MCF 10A (cell line): ENCODE measurements at regions of chr2 and their contacts with region 1.

Region 1: DNA sequence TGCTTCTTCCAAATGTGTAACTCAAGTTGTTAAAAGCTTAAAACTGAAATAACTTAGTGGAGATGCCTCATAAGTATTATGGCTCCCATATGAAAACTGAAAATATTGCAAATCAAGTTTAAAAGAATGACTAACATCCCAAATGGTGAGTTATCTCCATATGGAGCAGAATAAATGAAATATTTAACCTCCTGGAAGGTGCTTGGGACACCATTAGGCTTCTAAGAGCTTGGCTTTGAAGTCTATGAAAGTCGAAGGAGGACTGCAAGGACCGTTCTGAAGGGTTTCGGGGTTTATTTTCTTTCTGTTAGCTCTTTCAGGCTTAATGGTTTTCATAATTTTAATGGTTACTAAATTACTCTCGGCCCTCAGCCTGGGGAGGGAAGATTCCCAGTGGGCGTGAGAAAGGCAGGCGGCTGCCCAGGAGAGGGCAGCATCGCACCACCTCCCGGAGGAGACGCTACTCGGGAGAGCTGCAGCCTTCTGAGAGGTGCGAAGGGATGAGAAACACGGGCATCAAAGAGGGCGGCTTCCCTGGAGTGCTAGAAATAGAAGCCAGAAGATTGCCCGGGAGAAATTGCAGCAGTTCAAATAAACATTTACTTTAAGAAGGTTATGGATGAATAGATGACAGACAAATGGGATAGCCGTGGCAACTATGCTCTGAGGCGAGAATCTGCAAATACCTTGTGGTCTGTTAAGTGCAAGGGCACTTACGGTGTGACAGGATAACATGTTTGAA is 43.1 kb downstream of the MAP3K19 start:
- DNase-seq: peak; percentile 73
- H3K4me3 Mint-ChIP-seq: no peak overlapping the region
- H3K27ac Mint-ChIP-seq: no peak overlapping the region
- H3K4me1 Mint-ChIP-seq: peaks cover 9% of the 10 kb centered on the region
- H3K27me3 Mint-ChIP-seq: peaks cover 25% of the 10 kb centered on the region
- CTCF ChIP-seq: peak; percentile 94

Region 2: DNA sequence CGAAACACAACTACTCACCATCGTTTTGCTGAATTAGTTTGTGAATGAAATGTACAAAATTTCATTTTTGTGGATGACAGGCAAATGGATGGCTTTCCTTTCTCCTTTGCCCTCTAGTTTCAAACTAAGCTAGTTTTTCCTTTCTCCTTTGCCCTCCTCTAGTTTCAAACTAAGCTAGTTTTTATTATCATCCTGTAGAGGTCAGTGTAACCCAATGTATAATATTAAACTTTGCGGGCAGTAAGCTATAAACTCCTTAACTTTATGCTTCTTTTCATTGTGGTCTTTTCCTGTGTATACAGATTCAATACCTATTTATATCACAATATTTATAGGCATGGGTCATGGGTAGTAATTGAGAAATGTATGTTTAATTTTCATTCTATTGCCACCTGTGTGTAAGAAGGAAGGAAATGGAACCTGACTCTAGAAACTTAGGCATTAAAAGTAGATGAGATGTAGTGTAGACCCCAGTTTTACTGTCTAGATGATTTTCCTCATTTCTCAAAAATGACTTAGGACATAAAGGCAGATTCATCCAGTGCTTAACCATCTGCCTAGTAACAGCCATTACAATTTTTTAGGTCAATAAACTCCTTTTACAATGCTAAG is 15.1 kb before region 1 on chr2:
- CTCF ChIA-PET with region 1: interaction called, 24 read pairs
- POLR2A ChIA-PET with region 1: interaction called, 5 read pairs
- intact Hi-C with region 1: no loop called
- DNase-seq: peak; percentile 46
- H3K4me3 Mint-ChIP-seq: no peak overlapping the region
- H3K27ac Mint-ChIP-seq: no peak overlapping the region
- H3K4me1 Mint-ChIP-seq: no peaks in the 10 kb centered on the region
- H3K27me3 Mint-ChIP-seq: peaks cover 50% of the 10 kb centered on the region
- CTCF ChIP-seq: peak; percentile 46

Region 3: DNA sequence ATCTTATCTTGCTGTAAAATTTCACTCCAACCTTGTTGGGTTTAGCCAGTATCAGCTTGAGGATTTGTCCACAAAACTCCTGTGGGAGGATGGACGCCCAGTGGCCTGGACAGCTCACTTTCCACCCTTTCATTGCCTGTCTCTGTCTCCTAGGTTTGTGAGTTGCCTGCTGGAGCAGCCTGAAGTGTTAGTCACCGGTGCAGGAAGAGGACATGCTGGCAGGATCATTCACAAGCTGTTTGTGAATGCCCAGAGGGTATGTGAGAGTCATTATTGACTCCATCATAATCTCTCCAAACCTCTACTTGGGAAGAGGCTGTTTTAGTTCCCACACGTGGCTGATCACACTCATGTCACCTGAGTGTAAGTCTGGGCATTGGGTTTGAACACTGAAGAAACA is 160.3 kb after region 1 on chr2:
- CTCF ChIA-PET with region 1: interaction called, 9 read pairs
- POLR2A ChIA-PET with region 1: no interaction called
- intact Hi-C with region 1: loop called (anchors 2 kb)
- DNase-seq: peak; percentile 75
- H3K4me3 Mint-ChIP-seq: no peak overlapping the region
- H3K27ac Mint-ChIP-seq: no peak overlapping the region
- H3K4me1 Mint-ChIP-seq: peaks cover 6% of the 10 kb centered on the region
- H3K27me3 Mint-ChIP-seq: no peaks in the 10 kb centered on the region
- CTCF ChIP-seq: no peak

Region 4: DNA sequence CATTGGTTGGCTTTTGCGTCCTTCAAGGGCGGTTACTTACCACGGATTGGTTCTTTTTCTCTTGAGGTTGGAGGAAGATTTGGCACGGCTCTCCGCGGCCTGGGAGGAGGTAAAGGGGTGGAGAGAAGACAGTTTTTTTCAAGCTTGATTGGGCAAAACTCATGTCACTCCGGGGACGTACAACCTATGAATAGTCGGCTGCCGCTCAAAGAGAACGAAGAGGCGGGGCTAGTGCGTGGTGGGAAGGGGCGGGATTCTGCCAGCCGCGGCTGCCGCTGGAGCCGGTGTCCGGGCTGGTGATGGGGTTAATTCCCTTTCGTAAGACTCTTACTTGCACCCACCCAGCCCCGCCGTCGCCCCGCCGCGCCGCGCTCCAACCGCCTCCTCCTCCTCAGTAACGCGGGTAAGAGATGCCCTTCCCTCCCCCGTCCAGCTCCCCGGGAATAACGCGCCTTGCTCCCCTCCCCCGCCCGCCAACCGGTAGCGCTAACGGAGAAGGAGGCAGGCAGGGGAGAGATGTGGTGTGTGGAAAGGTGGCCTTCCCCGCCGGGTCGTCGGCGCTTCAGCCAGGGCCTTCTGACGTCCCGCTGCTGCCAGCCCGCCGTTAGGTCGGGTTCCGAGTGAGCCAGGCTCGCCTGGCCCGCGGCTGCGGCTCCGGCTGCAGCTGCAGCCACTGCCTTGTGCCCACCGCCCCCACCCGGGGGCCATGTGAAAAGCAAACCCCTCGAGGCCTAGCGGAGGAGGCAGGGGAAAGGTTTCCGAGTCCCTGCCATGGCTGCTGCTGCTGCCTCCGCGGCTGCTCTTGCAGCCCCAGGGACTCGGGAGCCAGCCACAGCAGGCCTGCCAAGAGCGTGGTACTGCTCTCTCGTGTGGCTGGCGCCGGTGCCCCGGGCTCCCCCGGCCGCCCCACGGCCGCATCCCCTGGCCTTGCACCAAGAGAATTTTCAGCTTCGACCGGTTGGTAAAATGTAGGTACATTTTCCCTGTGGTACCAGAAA is 527.4 kb after region 1 on chr2 and contains the start of gene R3HDM1:
- CTCF ChIA-PET with region 1: interaction called, 5 read pairs
- POLR2A ChIA-PET with region 1: no interaction called
- intact Hi-C with region 1: loop called (anchors 2 kb)
- DNase-seq: peak; percentile 100
- H3K4me3 Mint-ChIP-seq: no peak within 1 kb of the TSS
- H3K27ac Mint-ChIP-seq: no peak within 1 kb of the TSS
- H3K4me1 Mint-ChIP-seq: peaks cover 6% of the 10 kb centered on the region
- H3K27me3 Mint-ChIP-seq: no peaks in the 10 kb centered on the region
- CTCF ChIP-seq: peak; percentile 16
- total RNA-seq, gene R3HDM1: 52.4 and 54.6 TPM in 2 replicates

Region 5: DNA sequence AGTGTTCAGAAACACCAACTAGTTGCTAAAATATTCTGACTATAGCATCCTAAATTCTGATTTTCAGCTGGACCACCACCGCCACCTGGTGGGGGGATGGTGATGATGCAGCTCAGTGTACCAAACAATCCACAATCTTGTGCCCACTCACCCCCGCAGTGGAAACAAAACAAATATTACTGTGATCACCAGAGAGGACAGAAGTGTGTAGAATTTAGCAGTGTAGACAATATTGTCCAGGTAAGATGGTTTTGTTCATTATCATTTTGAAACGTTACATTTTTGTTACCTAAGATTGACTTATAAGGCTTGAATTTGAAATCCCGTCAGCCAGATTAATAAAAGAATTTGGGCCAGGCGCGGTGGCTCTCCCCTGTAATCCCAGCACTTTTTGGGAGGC is 705.8 kb after region 1 on chr2:
- CTCF ChIA-PET with region 1: interaction called, 106 read pairs
- POLR2A ChIA-PET with region 1: interaction called, 3 read pairs
- intact Hi-C with region 1: loop called (anchors 1 kb)
- DNase-seq: peak; percentile 62
- H3K4me3 Mint-ChIP-seq: no peak overlapping the region
- H3K27ac Mint-ChIP-seq: peak overlapping the region; percentile 3
- H3K4me1 Mint-ChIP-seq: no peaks in the 10 kb centered on the region
- H3K27me3 Mint-ChIP-seq: no peaks in the 10 kb centered on the region
- CTCF ChIP-seq: peak; percentile 86